ENCODE measurements at regions of chr6 and their contacts with region 1.

Region 1: GRCh38 chr6:26204332-26205165 is 117.3 kb downstream of the HFE start:
- DNase-seq: peak; percentile 89 to 97 (median 95)
- ATAC-seq: peak; percentile 90 to 94 (median 92)
- H3K4me3 ChIP-seq: peak overlapping the region; percentile 56 to 83 (median 74)
- H3K27ac ChIP-seq: peak overlapping the region; percentile 83 to 98 (median 94)
- H3K4me1 ChIP-seq: peaks cover 0 to 43% (median 7%) of the 10 kb centered on the region in 12 donors
- H3K27me3 ChIP-seq: peaks cover 0 to 15% (median 0%) of the 10 kb centered on the region in 9 donors
- CTCF ChIP-seq: peak in 11 of 12 donors; percentile 19 to 71 (median 36)
- POLR2A ChIP-seq: peak in 1 of 2 donors; percentile 82

Region 2: GRCh38 chr6:26031595-26032339 is 172.8 kb before region 1 on chr6:
- intact Hi-C with region 1: loop called in 5 of 10 experiments (anchors 5 to 10 kb)
- DNase-seq: peak; percentile 69 to 87 (median 74)
- ATAC-seq: peak; percentile 82 to 88 (median 86)
- H3K4me3 ChIP-seq: peak overlapping the region; percentile 21 to 69 (median 60)
- H3K27ac ChIP-seq: peak overlapping the region in 8 of 12 donors; percentile 58 to 87 (median 80)
- H3K4me1 ChIP-seq: peaks cover 0 to 39% (median 20%) of the 10 kb centered on the region in 12 donors
- H3K27me3 ChIP-seq: no peaks in the 10 kb centered on the region
- CTCF ChIP-seq: peak in 3 of 12 donors; percentile 18 to 34 (median 27)
- POLR2A ChIP-seq: no peak

Region 3: DNA sequence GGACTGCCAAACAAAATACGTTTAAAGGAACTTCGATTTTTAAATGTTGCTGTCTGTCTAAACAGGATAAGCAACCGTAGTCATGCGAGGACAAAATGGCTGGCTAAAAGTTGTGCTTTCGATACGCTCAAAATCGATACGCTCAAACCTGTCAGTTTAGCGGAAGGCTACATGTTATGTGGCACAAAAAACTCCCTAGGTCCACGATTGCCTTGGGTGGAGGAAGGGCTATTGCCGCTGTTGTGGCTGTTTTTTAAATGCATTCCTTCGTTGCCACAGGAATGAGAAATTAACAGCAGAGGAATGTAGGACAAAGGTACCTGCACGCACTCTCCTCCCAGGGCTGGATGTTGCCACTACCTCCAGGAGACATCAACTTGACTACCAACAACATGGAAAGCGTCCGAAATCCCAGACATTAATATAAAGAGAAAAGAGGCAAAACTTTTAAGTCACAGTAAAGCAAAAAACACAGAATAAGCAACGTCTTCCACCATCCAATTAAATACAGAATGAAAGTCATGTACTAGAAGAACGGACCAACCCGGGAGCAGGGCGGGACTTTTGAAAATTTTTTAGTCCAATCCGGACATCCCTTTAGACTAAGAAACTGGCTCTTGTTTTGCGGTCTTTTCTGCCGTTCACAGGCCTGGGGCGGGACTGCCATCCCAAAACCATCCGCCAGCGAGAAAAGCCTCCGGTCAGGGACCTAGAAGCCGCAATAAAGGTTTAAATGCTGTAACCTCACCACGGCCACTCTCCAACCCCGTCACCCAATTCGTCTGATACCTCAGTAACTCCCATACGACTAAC is 149.5 kb before region 1 on chr6:
- intact Hi-C with region 1: loop called in 2 of 10 experiments (anchors 5 to 10 kb)
- DNase-seq: peak; percentile 80 to 92 (median 89)
- ATAC-seq: peak; percentile 79 to 89 (median 84)
- H3K4me3 ChIP-seq: peak overlapping the region; percentile 59 to 80 (median 74)
- H3K27ac ChIP-seq: peak overlapping the region; percentile 81 to 98 (median 95)
- H3K4me1 ChIP-seq: peaks cover 0 to 24% (median 10%) of the 10 kb centered on the region in 12 donors
- H3K27me3 ChIP-seq: no peaks in the 10 kb centered on the region
- CTCF ChIP-seq: peak in 2 of 12 donors; percentile 5 to 22
- POLR2A ChIP-seq: no peak

Region 4: GRCh38 chr6:26156076-26156849 is 48.3 kb before region 1 on chr6:
- intact Hi-C with region 1: loop called in 6 of 10 experiments (anchors 2 to 5 kb)
- DNase-seq: peak; percentile 92 to 96 (median 93)
- ATAC-seq: peak; percentile 80 to 89 (median 86)
- H3K4me3 ChIP-seq: peak overlapping the region; percentile 49 to 94 (median 78)
- H3K27ac ChIP-seq: peak overlapping the region; percentile 70 to 98 (median 95)
- H3K4me1 ChIP-seq: peaks cover 0 to 30% (median 11%) of the 10 kb centered on the region in 12 donors
- H3K27me3 ChIP-seq: no peaks in the 10 kb centered on the region
- CTCF ChIP-seq: peak in 1 of 12 donors; percentile 7
- POLR2A ChIP-seq: peak; percentile 67 to 99

Region 5: DNA sequence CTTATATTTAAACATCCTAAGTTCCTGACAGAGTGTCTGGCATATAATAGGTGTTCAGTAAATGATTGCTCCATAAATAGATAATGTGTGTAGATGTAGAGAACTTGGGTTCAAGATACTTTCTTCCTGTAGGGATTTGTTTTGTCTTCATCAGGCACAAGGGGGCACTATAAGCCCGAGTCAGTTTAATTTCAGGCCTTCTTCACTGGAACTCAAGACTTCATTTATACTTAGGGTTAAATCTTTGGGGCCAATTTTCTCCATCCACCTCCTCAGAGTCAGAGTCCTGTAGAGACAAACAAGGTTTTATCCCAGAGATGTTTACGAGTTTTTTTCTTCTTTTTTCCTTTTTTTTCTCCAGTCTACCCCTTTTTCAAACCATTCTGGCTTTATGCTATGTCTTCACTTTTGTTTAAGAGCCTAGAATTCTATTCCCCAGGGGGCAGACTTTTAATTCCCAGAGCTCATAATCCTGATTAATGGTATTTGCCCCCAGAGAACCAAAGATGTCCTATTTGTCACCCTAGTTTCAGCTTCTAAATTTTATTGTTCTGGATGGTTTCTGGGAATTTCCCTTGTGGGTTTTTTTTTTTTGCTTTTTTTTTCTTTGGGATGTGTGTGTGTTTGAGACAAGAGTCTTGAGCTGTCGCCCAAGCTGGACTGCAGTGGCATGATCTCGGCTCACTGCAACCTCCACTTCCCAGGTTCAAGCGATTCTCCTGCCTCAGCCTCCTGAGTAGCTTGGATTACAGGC is 28.9 kb before region 1 on chr6:
- intact Hi-C with region 1: loop called in 1 of 10 experiments (anchors 2 kb)
- DNase-seq: no peak
- ATAC-seq: no peak
- H3K4me3 ChIP-seq: no peak overlapping the region
- H3K27ac ChIP-seq: peak overlapping the region in 2 of 12 donors; percentile 1 to 40
- H3K4me1 ChIP-seq: peaks cover 0 to 20% (median 9%) of the 10 kb centered on the region in 12 donors
- H3K27me3 ChIP-seq: no peaks in the 10 kb centered on the region
- CTCF ChIP-seq: peak; percentile 45 to 76 (median 62)
- POLR2A ChIP-seq: no peak

Region 6: DNA sequence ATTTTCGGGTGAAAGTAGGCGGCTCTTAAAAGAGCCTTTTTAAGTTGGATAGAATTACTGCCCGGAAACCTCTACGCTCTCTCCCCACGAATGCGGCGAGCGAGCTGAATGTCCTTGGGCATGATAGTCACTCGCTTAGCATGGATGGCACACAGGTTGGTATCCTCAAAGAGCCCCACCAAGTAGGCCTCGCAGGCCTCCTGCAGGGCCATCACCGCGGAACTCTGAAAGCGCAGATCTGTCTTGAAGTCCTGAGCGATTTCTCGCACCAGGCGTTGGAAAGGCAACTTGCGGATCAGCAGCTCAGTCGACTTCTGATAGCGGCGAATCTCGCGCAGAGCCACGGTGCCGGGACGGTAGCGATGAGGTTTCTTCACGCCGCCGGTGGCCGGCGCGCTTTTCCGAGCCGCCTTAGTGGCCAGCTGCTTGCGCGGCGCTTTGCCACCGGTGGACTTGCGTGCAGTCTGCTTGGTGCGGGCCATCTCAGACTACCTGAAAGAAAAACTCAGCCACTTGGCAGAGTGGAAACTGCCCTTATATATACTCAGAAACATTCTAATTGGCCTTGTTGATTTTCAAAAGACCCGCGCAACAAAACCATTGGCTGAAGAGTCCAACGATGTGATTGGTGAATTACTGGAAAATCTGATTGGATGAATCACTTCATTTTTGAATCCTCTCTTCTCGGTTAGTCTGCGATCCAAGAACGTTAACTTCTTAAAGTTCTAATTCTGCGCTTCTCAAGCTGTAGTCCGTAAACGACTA is 66.5 kb after region 1 on chr6:
- intact Hi-C with region 1: loop called in 1 of 10 experiments (anchors 10 kb)
- DNase-seq: peak in 4 of 5 donors; percentile 33 to 67 (median 62)
- ATAC-seq: peak in 3 of 4 donors; percentile 50 to 65 (median 59)
- H3K4me3 ChIP-seq: peak overlapping the region in 11 of 12 donors; percentile 10 to 66 (median 52)
- H3K27ac ChIP-seq: peak overlapping the region in 10 of 12 donors; percentile 14 to 84 (median 72)
- H3K4me1 ChIP-seq: peaks cover 0 to 28% (median 12%) of the 10 kb centered on the region in 12 donors
- H3K27me3 ChIP-seq: peaks cover 0 to 75% (median 24%) of the 10 kb centered on the region in 9 donors
- CTCF ChIP-seq: no peak
- POLR2A ChIP-seq: no peak

Measured in heart left ventricle (tissue), 16 donors.